ENCODE measurements at regions of chr4 and their contacts with region 1.

Region 1: DNA sequence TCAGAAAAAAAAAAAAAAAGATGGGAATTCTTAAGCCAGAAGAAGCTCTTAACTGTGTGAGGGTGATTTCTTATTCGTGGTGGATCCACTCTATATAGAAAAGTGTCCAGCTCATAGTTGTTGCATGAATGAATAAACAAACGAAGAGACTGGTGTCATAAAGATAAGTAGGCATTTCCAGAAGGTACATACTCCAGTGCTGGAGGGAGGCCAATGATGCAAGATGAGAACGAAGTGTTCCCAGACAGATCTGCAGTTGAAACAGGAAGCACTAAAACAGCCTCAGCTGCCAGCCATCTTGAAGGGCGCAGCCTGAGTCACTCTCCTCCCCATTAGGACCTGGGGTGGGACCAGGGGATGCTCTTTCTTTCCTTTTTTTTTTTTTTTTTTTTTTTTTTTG is 47.4 kb upstream of the HOPX start:
- DNase-seq: peak in 4 of 5 donors; percentile 21 to 85 (median 47)
- ATAC-seq: peak; percentile 79 to 95 (median 86)
- H3K4me3 ChIP-seq: no peak overlapping the region
- H3K27ac ChIP-seq: no peak overlapping the region
- H3K4me1 ChIP-seq: peaks cover 0 to 25% (median 0%) of the 10 kb centered on the region in 12 donors
- H3K27me3 ChIP-seq: no peaks in the 10 kb centered on the region
- CTCF ChIP-seq: no peak
- POLR2A ChIP-seq: no peak

Region 2: DNA sequence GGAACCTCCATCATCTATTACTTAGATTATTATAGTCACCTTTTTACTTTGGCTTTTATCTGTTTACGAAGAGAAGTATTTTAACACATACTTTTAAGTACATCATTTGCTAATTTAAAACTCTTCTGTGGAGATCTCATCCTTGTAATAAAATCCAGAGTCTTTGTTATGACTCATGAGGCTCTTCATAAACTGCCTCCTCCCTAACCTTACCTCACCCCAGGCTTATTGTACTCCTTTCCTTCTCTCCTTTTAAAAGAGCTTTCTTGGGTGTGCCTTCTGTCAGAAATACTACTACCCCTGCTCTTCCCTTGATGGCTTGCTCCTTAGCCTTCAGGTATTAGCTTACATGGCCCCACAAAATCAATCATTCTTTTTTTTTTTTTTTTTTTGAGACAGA is 216.3 kb before region 1 on chr4:
- intact Hi-C with region 1: loop called in 1 of 10 experiments (anchors 5 kb)
- DNase-seq: no peak
- ATAC-seq: no peak
- H3K4me3 ChIP-seq: no peak overlapping the region
- H3K27ac ChIP-seq: no peak overlapping the region
- H3K4me1 ChIP-seq: no peaks in the 10 kb centered on the region
- H3K27me3 ChIP-seq: peaks cover 0 to 2% (median 0%) of the 10 kb centered on the region in 9 donors
- CTCF ChIP-seq: no peak
- POLR2A ChIP-seq: no peak

Region 3: GRCh38 chr4:56655209-56655626 is 73.3 kb before region 1 on chr4:
- intact Hi-C with region 1: loop called in 1 of 10 experiments (anchors 10 kb)
- DNase-seq: peak in 4 of 5 donors; percentile 15 to 60 (median 42)
- ATAC-seq: peak; percentile 27 to 73 (median 65)
- H3K4me3 ChIP-seq: peak overlapping the region; percentile 35 to 69 (median 55)
- H3K27ac ChIP-seq: peak overlapping the region in 5 of 12 donors; percentile 34 to 85 (median 61)
- H3K4me1 ChIP-seq: peaks cover 0 to 35% (median 16%) of the 10 kb centered on the region in 12 donors
- H3K27me3 ChIP-seq: peaks cover 4 to 42% (median 19%) of the 10 kb centered on the region in 9 donors
- CTCF ChIP-seq: no peak
- POLR2A ChIP-seq: no peak

Measured in heart left ventricle (tissue), 16 donors.